ENCODE measurements at regions of chr19 and their contacts with region 1.

Region 1: GRCh38 chr19:38683393-38684080 is 36.1 kb downstream of the ACTN4 start:
- DNase-seq: peak; percentile 66 to 75
- ATAC-seq: peak; percentile 33 to 59 (median 49)
- H3K4me3 ChIP-seq: no peak overlapping the region
- H3K4me3 Mint-ChIP-seq: peak overlapping the region; percentile 68
- H3K27ac ChIP-seq: peak overlapping the region; percentile 96
- H3K27ac Mint-ChIP-seq: peak overlapping the region; percentile 98 to 100
- H3K4me1 ChIP-seq: peaks cover 95% of the 10 kb centered on the region
- H3K4me1 Mint-ChIP-seq: peaks cover 83 to 88% of the 10 kb centered on the region in 2 donors
- H3K27me3 ChIP-seq: no peaks in the 10 kb centered on the region
- H3K27me3 Mint-ChIP-seq: no peaks in the 10 kb centered on the region
- CTCF ChIP-seq: no peak

Region 2: DNA sequence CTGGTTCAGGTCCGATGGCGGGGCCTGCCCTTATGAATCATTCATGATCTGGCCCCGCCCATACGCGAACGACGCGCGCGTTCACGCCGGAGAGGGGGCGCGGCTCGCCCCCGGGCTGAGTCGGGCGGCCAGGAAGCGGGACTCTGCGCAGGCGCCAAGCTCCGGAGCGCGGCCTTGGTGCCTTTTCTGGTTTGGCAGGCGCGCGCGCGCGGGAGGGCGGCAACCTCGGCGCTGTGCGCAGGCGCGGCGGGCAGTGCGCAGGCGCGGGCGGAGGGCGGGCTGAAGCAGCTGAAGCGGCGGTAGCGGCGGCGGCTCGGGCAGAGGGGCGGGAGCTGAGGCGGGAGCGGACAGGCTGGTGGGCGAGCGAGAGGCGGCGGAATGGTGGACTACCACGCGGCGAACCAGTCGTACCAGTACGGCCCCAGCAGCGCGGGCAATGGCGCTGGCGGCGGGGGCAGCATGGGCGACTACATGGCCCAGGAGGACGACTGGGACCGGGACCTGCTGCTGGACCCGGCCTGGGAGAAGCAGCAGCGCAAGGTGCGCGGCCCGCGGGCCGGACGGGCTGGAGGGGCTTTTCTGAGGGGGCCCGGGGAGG is 36.1 kb before region 1 on chr19 and contains the start of gene ACTN4:
- intact Hi-C with region 1: loop called (anchors 5 kb)
- DNase-seq: peak; percentile 99 to 100
- ATAC-seq: peak; percentile 90 to 98 (median 91)
- H3K4me3 ChIP-seq: peak within 1 kb of the TSS; percentile 99
- H3K4me3 Mint-ChIP-seq: peak within 1 kb of the TSS; percentile 99
- H3K27ac ChIP-seq: peak within 1 kb of the TSS; percentile 67
- H3K27ac Mint-ChIP-seq: peak within 1 kb of the TSS; percentile 85 to 92
- H3K4me1 ChIP-seq: peaks cover 49% of the 10 kb centered on the region
- H3K4me1 Mint-ChIP-seq: peaks cover 45 to 47% of the 10 kb centered on the region in 2 donors
- H3K27me3 ChIP-seq: no peaks in the 10 kb centered on the region
- H3K27me3 Mint-ChIP-seq: no peaks in the 10 kb centered on the region
- CTCF ChIP-seq: no peak
- total RNA-seq, gene ACTN4: 443 to 595 (median 541) TPM

Region 3: GRCh38 chr19:38666663-38667511 is 16.6 kb before region 1 on chr19:
- intact Hi-C with region 1: loop called (anchors 1 kb)
- DNase-seq: peak; percentile 47 to 71
- ATAC-seq: peak; percentile 72 to 78 (median 77)
- H3K4me3 ChIP-seq: no peak overlapping the region
- H3K4me3 Mint-ChIP-seq: peak overlapping the region; percentile 75
- H3K27ac ChIP-seq: peak overlapping the region; percentile 77
- H3K27ac Mint-ChIP-seq: peak overlapping the region; percentile 85
- H3K4me1 ChIP-seq: peaks cover 98% of the 10 kb centered on the region
- H3K4me1 Mint-ChIP-seq: peaks cover 88 to 89% of the 10 kb centered on the region in 2 donors
- H3K27me3 ChIP-seq: no peaks in the 10 kb centered on the region
- H3K27me3 Mint-ChIP-seq: no peaks in the 10 kb centered on the region
- CTCF ChIP-seq: no peak

Region 4: DNA sequence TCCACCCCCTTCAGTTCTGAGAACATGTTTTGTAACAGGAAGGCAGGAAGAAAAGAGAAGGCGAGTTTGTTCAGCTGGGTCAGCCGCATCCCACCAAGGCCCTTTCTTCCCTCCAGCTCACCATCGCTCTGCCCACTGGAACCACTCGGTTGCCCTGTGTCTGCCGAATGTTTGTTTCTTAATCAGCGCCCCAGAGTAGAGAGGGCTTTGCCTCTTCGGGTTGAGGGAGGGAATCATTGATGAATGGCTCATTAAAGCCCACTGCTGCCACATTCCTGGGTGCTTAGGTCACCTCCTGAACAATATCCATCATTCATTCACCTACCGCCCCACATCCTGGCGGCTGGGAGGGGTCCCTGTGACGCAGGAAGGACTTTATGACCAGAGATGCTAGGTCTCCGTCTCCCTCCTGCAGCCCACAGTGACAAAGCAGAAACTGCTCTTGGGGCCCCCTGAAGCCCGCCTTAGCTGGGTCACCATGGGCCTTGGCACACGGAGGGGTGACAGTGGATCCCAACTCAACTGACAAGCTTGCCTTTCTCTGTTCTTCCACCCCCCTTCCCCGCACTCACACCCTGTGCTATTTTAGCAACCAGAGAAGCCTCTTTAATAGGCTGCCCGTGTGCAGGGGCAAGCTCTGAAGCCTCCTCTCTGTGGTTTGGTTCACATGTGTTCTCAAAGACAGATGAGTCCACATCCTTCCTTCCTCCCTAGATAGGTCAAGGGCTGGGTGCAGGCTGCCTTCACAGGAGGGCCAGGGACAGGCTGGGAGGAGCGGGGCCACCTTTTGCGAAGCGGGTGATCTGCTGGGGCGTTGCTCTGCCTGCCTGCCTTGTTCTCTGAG is 10.1 kb after region 1 on chr19:
- intact Hi-C with region 1: loop called (anchors 1 kb)
- DNase-seq: peak; percentile 58 to 75
- ATAC-seq: peak; percentile 74 to 88 (median 85)
- H3K4me3 ChIP-seq: peak overlapping the region; percentile 10
- H3K4me3 Mint-ChIP-seq: peak overlapping the region; percentile 75
- H3K27ac ChIP-seq: peak overlapping the region; percentile 81
- H3K27ac Mint-ChIP-seq: peak overlapping the region; percentile 89 to 93
- H3K4me1 ChIP-seq: peaks cover 94% of the 10 kb centered on the region
- H3K4me1 Mint-ChIP-seq: peaks cover 86 to 91% of the 10 kb centered on the region in 2 donors
- H3K27me3 ChIP-seq: no peaks in the 10 kb centered on the region
- H3K27me3 Mint-ChIP-seq: no peaks in the 10 kb centered on the region
- CTCF ChIP-seq: no peak

Region 5: GRCh38 chr19:38718747-38719543 is 35.4 kb after region 1 on chr19:
- intact Hi-C with region 1: no loop called
- DNase-seq: no peak
- ATAC-seq: peak in 1 of 3 donors; percentile 3
- H3K4me3 ChIP-seq: no peak overlapping the region
- H3K4me3 Mint-ChIP-seq: no peak overlapping the region
- H3K27ac ChIP-seq: no peak overlapping the region
- H3K27ac Mint-ChIP-seq: no peak overlapping the region
- H3K4me1 ChIP-seq: no peaks in the 10 kb centered on the region
- H3K4me1 Mint-ChIP-seq: peaks cover 0 to 3% of the 10 kb centered on the region in 2 donors
- H3K27me3 ChIP-seq: no peaks in the 10 kb centered on the region
- H3K27me3 Mint-ChIP-seq: no peaks in the 10 kb centered on the region
- CTCF ChIP-seq: no peak

Measured in natural killer cell (primary cell).